ENCODE measurements at regions of chr2 and their contacts with region 1.

Region 1: DNA sequence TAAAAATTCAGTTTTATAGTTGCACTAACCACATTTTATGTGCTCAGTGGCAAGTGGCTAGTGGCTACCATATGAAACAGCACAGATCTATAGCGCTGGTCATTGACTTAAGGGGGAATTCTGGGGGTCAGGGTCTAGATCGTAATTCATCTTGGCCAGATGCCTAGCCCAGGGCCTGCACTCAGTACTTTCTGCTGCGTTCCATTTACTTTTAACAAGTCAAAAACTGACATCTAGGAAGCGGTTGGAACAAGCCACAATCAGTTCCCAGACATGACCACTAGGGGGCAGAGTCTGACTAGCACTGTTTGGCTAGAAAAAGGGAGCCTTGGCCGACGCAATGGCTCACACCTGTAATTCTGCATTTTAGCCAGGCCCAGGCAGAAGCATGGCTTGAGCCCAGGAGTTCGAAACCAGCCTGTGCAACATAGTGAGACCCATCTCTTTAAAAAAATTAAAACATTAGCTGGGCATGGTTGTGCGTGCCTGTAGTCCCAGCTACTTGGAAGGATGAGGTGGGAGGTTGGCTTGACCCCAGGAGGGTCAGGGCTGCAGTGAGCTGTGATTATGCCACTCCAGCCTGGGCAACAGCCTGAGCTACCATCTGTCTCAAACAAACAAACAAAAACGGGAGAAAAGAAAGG is 9.0 kb upstream of the TMBIM1 start:
- DNase-seq: peak; percentile 79 to 90
- H3K4me3 ChIP-seq: no peak overlapping the region
- H3K27ac ChIP-seq: no peak overlapping the region
- H3K4me1 ChIP-seq: no peaks in the 10 kb centered on the region
- H3K27me3 ChIP-seq: no peaks in the 10 kb centered on the region
- CTCF ChIP-seq: peak; percentile 94 to 99 (median 95)
- POLR2A ChIP-seq: no peak

Region 2: GRCh38 chr2:217988014-217988839 is 313.1 kb before region 1 on chr2:
- intact Hi-C with region 1: no loop called
- DNase-seq: peak; percentile 86 to 91
- H3K4me3 ChIP-seq: no peak overlapping the region
- H3K27ac ChIP-seq: peak overlapping the region; percentile 52 to 75
- H3K4me1 ChIP-seq: peaks cover 0 to 16% of the 10 kb centered on the region in 2 donors
- H3K27me3 ChIP-seq: no peaks in the 10 kb centered on the region
- CTCF ChIP-seq: peak; percentile 90 to 95 (median 95)
- POLR2A ChIP-seq: no peak

Region 3: DNA sequence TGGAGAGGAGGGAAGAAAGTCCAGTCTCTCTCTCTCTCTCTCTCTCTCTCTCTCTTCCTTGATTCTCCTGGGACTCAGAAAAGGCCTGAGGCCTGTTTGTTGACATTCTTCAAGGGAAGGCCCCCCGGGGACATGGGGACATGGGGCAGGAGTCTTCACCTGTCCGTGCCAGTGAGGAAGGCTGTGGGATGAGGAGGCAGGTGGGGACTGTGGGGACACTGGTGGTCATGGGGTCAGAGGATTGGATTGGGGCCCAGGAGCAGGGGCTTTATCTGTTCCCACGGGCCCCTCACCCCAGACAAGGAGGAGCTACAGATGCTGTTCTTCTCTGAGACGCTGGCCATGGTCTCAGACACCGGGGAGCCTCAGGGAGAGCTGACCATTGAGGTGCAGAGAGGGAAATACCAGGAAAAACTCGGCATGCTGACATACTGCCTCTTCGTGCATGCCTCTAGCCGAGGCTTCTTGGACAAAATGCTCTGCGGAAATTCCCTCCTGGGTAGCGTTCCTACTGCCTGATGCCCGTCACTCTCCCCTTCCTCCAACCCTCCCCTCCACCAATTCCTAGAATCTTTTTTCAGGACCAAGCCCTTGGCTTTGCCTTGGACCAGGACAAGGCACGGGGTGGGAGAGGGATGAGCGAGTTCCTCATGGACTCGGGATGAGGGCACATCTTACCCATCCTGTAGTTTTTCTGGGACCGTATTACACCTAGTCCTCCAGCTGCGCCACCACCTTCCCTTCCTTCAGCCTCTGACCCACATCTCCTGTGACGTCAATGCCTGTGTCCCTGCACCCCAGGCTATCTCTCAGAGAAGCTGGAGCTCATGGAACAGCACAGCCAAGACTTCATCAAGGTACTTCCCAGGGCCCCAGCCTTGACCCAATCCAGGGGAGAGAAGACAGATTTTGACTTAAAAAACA is 56.2 kb after region 1 on chr2:
- intact Hi-C with region 1: loop called (anchors 10 kb)
- DNase-seq: no peak
- H3K4me3 ChIP-seq: no peak overlapping the region
- H3K27ac ChIP-seq: no peak overlapping the region
- H3K4me1 ChIP-seq: peaks cover 0 to 5% of the 10 kb centered on the region in 2 donors
- H3K27me3 ChIP-seq: no peaks in the 10 kb centered on the region
- CTCF ChIP-seq: no peak
- POLR2A ChIP-seq: no peak

Region 4: GRCh38 chr2:218471982-218472381 is 170.7 kb after region 1 on chr2:
- intact Hi-C with region 1: no loop called
- DNase-seq: no peak
- H3K4me3 ChIP-seq: no peak overlapping the region
- H3K27ac ChIP-seq: no peak overlapping the region
- H3K4me1 ChIP-seq: no peaks in the 10 kb centered on the region
- H3K27me3 ChIP-seq: no peaks in the 10 kb centered on the region
- CTCF ChIP-seq: no peak
- POLR2A ChIP-seq: no peak

Measured in uterus (tissue), 4 donors.